Naive thymus-derived CD4-positive, alpha-beta T cell (primary cell): ENCODE measurements at regions of chr1 and their contacts with region 1.

Region 1: GRCh38 chr1:18643154-18644012 is 12.7 kb downstream of the PAX7 start:
- DNase-seq: peak in 1 of 9 donors; percentile 33
- ATAC-seq: no peak
- H3K4me3 ChIP-seq: no peak overlapping the region
- H3K4me3 Mint-ChIP-seq: peak overlapping the region; percentile 23 to 89 (median 78)
- H3K27ac ChIP-seq: no peak overlapping the region
- H3K27ac Mint-ChIP-seq: peak overlapping the region in 1 of 9 donors; percentile 46
- H3K4me1 ChIP-seq: peaks cover 0 to 48% of the 10 kb centered on the region in 2 donors
- H3K4me1 Mint-ChIP-seq: peaks cover 16 to 75% (median 64%) of the 10 kb centered on the region in 7 donors
- H3K27me3 ChIP-seq: peaks cover 5 to 55% of the 10 kb centered on the region in 2 donors
- H3K27me3 Mint-ChIP-seq: peaks cover 76 to 90% (median 86%) of the 10 kb centered on the region in 5 donors

Region 2: DNA sequence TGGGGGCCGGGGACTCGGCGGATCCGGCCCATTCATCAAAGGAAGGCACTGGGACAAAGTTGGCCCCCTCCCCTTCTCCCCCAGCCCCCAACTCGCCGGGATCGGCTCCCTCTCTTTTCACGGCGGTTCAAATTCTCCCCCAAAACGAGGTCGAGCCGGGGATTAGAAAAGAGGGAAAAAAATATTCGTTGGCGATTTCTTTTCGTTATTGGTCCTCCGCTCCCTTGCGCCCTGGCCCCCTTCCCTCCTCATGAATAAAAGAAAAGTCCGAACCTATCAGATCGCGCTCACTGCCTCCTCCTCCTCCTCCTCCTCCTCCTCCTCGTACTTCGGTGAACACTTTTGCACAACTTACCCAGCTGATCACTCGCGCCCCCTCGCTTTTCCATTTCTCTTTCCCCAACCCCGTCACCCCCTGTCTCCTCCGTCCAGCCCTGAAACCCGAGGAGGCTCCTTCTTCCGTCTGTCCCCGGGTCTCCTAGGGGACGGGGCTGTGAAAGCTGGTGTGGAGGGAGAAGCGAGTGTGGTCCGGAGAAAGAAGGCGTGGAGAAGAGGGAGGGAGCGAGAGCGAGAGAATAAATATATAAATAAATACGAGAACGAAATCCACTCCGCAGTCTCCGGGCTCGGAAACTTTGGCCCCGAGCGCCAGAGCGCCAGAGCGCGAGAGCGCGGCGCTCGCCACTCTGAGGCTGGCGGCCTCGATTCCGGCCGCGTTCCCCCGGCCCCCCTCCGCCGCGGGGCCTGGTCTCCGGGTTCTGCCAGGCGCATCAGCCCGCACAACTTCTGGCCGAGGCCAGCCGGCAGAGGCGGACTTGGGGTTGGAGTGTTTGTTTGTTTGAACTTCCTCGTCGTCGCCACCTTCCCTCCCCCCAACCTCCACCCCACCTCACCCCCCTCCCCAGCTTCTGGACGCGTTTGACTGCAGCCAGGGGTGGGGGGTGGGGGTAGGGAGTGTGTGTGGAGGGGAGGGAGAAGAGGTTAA is 12.6 kb before region 1 on chr1 and contains the start of gene PAX7:
- CTCF ChIA-PET with region 1: no interaction called
- POLR2A ChIA-PET with region 1: interaction called, 7 read pairs
- intact Hi-C with region 1: loop called (anchors 1 to 2 kb)
- DNase-seq: no peak
- ATAC-seq: no peak
- H3K4me3 ChIP-seq: no peak within 1 kb of the TSS
- H3K4me3 Mint-ChIP-seq: peak within 1 kb of the TSS; percentile 27 to 75 (median 64)
- H3K27ac ChIP-seq: no peak within 1 kb of the TSS
- H3K27ac Mint-ChIP-seq: peak within 1 kb of the TSS in 1 of 9 donors; percentile 91
- H3K4me1 ChIP-seq: peaks cover 0 to 8% of the 10 kb centered on the region in 2 donors
- H3K4me1 Mint-ChIP-seq: peaks cover 3 to 47% (median 33%) of the 10 kb centered on the region in 7 donors
- H3K27me3 ChIP-seq: peaks cover 0 to 55% of the 10 kb centered on the region in 2 donors
- H3K27me3 Mint-ChIP-seq: peaks cover 85 to 94% (median 92%) of the 10 kb centered on the region in 5 donors
- total RNA-seq, gene PAX7: not detected

Region 3: GRCh38 chr1:18681423-18681835 is 38.0 kb after region 1 on chr1:
- CTCF ChIA-PET with region 1: no interaction called
- POLR2A ChIA-PET with region 1: no interaction called
- intact Hi-C with region 1: loop called in 1 of 2 experiments (anchors 2 kb)
- DNase-seq: peak in 6 of 9 donors; percentile 10 to 55 (median 38)
- ATAC-seq: no peak
- H3K4me3 ChIP-seq: no peak overlapping the region
- H3K4me3 Mint-ChIP-seq: no peak overlapping the region
- H3K27ac ChIP-seq: no peak overlapping the region
- H3K27ac Mint-ChIP-seq: no peak overlapping the region
- H3K4me1 ChIP-seq: peaks cover 0 to 3% of the 10 kb centered on the region in 2 donors
- H3K4me1 Mint-ChIP-seq: peaks cover 0 to 10% (median 2%) of the 10 kb centered on the region in 7 donors
- H3K27me3 ChIP-seq: no peaks in the 10 kb centered on the region
- H3K27me3 Mint-ChIP-seq: peaks cover 2 to 27% (median 14%) of the 10 kb centered on the region in 5 donors

Region 4: DNA sequence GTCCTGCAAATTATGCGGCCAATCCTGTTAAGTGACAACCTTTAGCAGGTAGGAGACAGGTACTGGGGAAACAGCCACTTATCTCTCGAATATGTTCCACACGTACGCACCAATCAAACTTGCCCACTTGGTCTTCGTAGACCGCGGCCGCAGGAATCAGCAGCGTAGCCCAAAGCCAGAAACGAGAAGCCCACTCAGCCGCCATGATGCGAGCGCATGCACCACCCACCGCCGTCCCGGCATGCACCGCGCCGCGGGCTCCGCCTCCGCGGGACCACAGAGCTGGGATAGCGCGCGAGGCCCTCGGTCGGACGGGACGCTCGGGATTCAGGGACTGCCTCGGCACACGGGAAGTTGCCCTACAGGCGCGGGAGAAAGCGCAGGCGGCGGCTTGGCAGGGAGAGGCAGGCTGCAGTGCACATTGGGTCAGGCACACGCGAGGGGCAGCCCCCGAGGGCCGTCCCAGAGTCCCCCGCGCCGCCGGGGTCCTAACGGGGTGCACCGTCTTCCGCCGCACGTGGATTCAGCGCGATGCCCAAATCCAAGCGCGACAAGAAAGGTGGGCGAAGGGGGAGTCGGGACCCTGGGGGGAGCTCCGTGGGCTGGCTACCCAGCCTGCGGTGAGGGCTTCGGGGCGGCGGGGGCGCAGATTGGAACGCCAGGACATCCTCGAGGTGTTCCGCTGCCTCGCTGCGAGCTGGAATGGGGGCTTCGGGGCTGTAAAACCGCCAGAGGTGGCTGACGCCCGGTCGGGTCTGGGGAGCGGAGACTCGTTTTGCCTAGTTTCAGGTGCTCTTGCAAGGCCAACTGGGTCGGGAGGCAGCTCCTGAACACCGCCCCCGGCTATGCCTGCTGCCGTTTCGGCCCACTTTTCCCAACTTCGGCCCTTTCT is 608.2 kb after region 1 on chr1 and contains the starts of genes EMC1 and MRTO4:
- CTCF ChIA-PET with region 1: no interaction called
- POLR2A ChIA-PET with region 1: no interaction called
- intact Hi-C with region 1: no loop called
- DNase-seq: peak; percentile 83 to 96 (median 92)
- ATAC-seq: peak; percentile 97
- H3K4me3 ChIP-seq: peak within 1 kb of the TSS; percentile 92
- H3K4me3 Mint-ChIP-seq: peak within 1 kb of the TSS; percentile 91 to 98 (median 96)
- H3K27ac ChIP-seq: peak within 1 kb of the TSS; percentile 91
- H3K27ac Mint-ChIP-seq: peak within 1 kb of the TSS; percentile 91 to 97 (median 95)
- H3K4me1 ChIP-seq: peaks cover 26 to 30% of the 10 kb centered on the region in 2 donors
- H3K4me1 Mint-ChIP-seq: peaks cover 20 to 46% (median 29%) of the 10 kb centered on the region in 7 donors
- H3K27me3 ChIP-seq: no peaks in the 10 kb centered on the region
- H3K27me3 Mint-ChIP-seq: no peaks in the 10 kb centered on the region
- total RNA-seq, gene EMC1: 29.8 to 43.7 (median 37.1) TPM
- total RNA-seq, gene MRTO4: 17.1 to 42.3 (median 22.4) TPM